ENCODE measurements at regions of chr5 and their contacts with region 1.

Region 1: GRCh38 chr5:142134331-142135010 is 25.9 kb downstream of the NDFIP1 start:
- DNase-seq: no peak
- ATAC-seq: no peak
- H3K4me3 ChIP-seq: no peak overlapping the region
- H3K27ac ChIP-seq: no peak overlapping the region
- H3K4me1 ChIP-seq: 0 out of 2 replicates have a peak, but pooled peaks cover 2% of the 10 kb centered on the region
- H3K27me3 ChIP-seq: no peaks in the 10 kb centered on the region
- CTCF ChIP-seq: no peak
- POLR2A ChIP-seq: no peak
- RAD21 ChIP-seq: no peak

Region 2: GRCh38 chr5:141992349-141992963 is 142.0 kb before region 1 on chr5:
- CTCF ChIA-PET with region 1: no interaction called
- POLR2A ChIA-PET with region 1: no interaction called
- dilution Hi-C with region 1: loop called (anchors 25 kb)
- in situ Hi-C with region 1: loop called (anchors 5 kb)
- intact Hi-C with region 1: no loop called
- DNase-seq: peak; percentile 62
- ATAC-seq: peak; percentile 69
- H3K4me3 ChIP-seq: no peak overlapping the region
- H3K27ac ChIP-seq: no peak overlapping the region
- H3K4me1 ChIP-seq: no peaks in the 10 kb centered on the region
- H3K27me3 ChIP-seq: no peaks in the 10 kb centered on the region
- CTCF ChIP-seq: peak; percentile 70
- POLR2A ChIP-seq: no peak
- RAD21 ChIP-seq: peak; percentile 61

Region 3: DNA sequence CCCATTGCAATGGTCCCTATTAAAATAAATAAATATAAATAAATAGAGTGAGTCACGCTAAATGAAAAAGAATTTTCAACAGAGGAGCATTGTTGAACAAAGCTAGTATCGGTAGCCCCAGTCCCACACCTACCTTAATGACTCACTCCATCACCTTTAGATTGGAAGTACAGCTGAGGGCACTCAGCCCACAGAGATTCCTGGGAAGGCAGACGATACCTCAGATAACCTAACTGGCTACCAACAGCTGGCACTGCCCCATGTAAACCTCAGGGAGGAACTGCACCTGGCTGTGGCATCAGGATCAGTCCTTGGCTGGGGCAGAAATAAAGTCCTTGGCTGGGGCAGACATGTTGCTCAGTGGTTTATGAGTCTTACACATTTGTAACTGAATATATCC is 141.0 kb after region 1 on chr5:
- CTCF ChIA-PET with region 1: no interaction called
- POLR2A ChIA-PET with region 1: no interaction called
- dilution Hi-C with region 1: no loop called
- in situ Hi-C with region 1: no loop called
- intact Hi-C with region 1: no loop called
- DNase-seq: no peak
- ATAC-seq: no peak
- H3K4me3 ChIP-seq: no peak overlapping the region
- H3K27ac ChIP-seq: no peak overlapping the region
- H3K4me1 ChIP-seq: peaks cover 2% of the 10 kb centered on the region; the same call in 1 of the 2 replicates
- H3K27me3 ChIP-seq: no peaks in the 10 kb centered on the region
- CTCF ChIP-seq: no peak
- POLR2A ChIP-seq: no peak
- RAD21 ChIP-seq: no peak